ENCODE measurements at regions of chr15 and their contacts with region 1.

Region 1: GRCh38 chr15:59002418-59002859 is 15.0 kb downstream of the RNF111 start:
- DNase-seq: no peak
- ATAC-seq: peak; percentile 75
- H3K4me3 Mint-ChIP-seq: peak overlapping the region; percentile 29
- H3K27ac Mint-ChIP-seq: peak overlapping the region; percentile 54
- H3K4me1 Mint-ChIP-seq: peaks cover 70% of the 10 kb centered on the region
- H3K27me3 Mint-ChIP-seq: no peaks in the 10 kb centered on the region
- CTCF ChIP-seq: no peak

Region 2: DNA sequence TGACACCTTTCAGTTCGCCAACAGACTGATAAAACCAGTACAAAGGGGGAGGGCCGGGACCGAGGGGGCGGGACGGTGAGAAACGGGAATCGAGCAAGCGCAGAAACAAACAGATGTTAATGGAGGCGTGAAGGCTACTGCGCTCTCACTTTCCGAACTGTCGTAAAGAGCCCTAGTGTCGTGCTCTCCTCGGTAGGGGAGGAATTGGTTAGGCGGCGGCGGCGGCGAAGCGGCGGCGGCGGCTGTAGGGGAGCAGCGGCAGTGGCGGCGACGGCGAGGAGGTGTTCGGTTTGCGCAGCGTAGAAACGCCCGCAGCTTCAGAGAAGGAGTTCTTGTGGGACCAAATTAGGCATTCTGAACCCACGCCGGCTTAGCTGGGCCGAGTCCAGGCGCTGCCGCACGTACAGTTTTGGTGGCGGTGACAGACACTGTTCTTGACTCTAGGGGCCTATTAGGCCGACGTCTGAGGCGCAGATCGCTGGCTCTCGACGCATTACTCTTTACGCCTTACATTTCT is 14.9 kb before region 1 on chr15 and contains the start of gene RNF111:
- CTCF ChIA-PET with region 1: no interaction called
- POLR2A ChIA-PET with region 1: interaction called, 5 read pairs
- intact Hi-C with region 1: loop called (anchors 1 kb)
- DNase-seq: peak; percentile 78
- ATAC-seq: peak; percentile 91
- H3K4me3 Mint-ChIP-seq: peak within 1 kb of the TSS; percentile 95
- H3K27ac Mint-ChIP-seq: peak within 1 kb of the TSS; percentile 94
- H3K4me1 Mint-ChIP-seq: peaks cover 45% of the 10 kb centered on the region
- H3K27me3 Mint-ChIP-seq: no peaks in the 10 kb centered on the region
- CTCF ChIP-seq: no peak
- total RNA-seq, gene RNF111: 52.5 and 55.8 TPM in 2 replicates

Region 3: GRCh38 chr15:59017449-59017848 is 15.0 kb after region 1 on chr15:
- CTCF ChIA-PET with region 1: no interaction called
- POLR2A ChIA-PET with region 1: interaction called, 4 read pairs
- intact Hi-C with region 1: loop called (anchors 2 kb)
- DNase-seq: no peak
- ATAC-seq: no peak
- H3K4me3 Mint-ChIP-seq: no peak overlapping the region
- H3K27ac Mint-ChIP-seq: no peak overlapping the region
- H3K4me1 Mint-ChIP-seq: peaks cover 19% of the 10 kb centered on the region
- H3K27me3 Mint-ChIP-seq: no peaks in the 10 kb centered on the region
- CTCF ChIP-seq: no peak

Measured in activated B cell treated with CpG ODN at 0.5 μM for 24 hours (primary cell).